GM10248 (cell line): ENCODE measurements at regions of chr17 and their contacts with region 1.

Region 1: GRCh38 chr17:42050393-42051012 is at the start of gene C17orf113:
- DNase-seq: peak; percentile 85
- CTCF ChIP-seq: peak; percentile 58

Region 2: GRCh38 chr17:41982026-41982760 is 68.3 kb before region 1 on chr17:
- CTCF ChIA-PET with region 1: no interaction called
- POLR2A ChIA-PET with region 1: no interaction called
- DNase-seq: no peak
- CTCF ChIP-seq: no peak

Region 3: GRCh38 chr17:42039794-42040763 is 10.4 kb before region 1 on chr17:
- CTCF ChIA-PET with region 1: interaction called, 11 read pairs
- POLR2A ChIA-PET with region 1: interaction called, 3 read pairs
- DNase-seq: no peak
- CTCF ChIP-seq: no peak